Caco-2 (cell line): ENCODE measurements at regions of chr5 and their contacts with region 1.

Region 1: GRCh38 chr5:137891849-137892248 is 2.6 kb downstream of the PKD2L2 start:
- DNase-seq: peak in 1 of 2 experiments; percentile 20
- H3K4me3 ChIP-seq: no peak overlapping the region
- H3K4me3 Mint-ChIP-seq: no peak overlapping the region
- H3K27ac Mint-ChIP-seq: no peak overlapping the region
- H3K4me1 ChIP-seq: peaks cover 15% of the 10 kb centered on the region
- H3K4me1 Mint-ChIP-seq: peaks cover 13% of the 10 kb centered on the region
- H3K27me3 ChIP-seq: no peaks in the 10 kb centered on the region
- H3K27me3 Mint-ChIP-seq: no peaks in the 10 kb centered on the region
- CTCF ChIP-seq: peak in 1 of 2 experiments; percentile 36

Region 2: DNA sequence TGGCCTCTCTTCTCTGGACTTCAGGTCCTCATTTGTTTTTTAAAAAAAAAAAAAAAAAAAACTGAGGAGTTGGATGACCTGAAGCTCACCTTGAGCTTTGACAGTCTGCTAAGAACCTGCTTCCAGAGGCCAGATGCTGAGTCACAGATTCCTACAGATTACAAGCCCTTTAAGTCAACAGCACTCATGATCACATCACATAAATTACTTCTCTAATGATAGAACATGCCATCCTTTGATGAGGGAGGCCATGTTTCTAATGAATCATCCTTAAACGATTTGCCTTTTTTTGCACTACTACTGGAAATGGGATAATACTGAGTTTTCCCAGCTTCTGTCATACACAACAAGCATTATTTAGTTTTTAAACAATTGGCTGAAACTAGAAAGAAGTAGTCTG is 58.4 kb before region 1 on chr5:
- CTCF ChIA-PET with region 1: no interaction called
- POLR2A ChIA-PET with region 1: no interaction called
- intact Hi-C with region 1: loop called (anchors 5 kb)
- DNase-seq: peak; percentile 78 to 88
- H3K4me3 ChIP-seq: no peak overlapping the region
- H3K4me3 Mint-ChIP-seq: no peak overlapping the region
- H3K27ac Mint-ChIP-seq: peak overlapping the region; percentile 42
- H3K4me1 ChIP-seq: peaks cover 30% of the 10 kb centered on the region
- H3K4me1 Mint-ChIP-seq: peaks cover 18% of the 10 kb centered on the region
- H3K27me3 ChIP-seq: no peaks in the 10 kb centered on the region
- H3K27me3 Mint-ChIP-seq: no peaks in the 10 kb centered on the region
- CTCF ChIP-seq: no peak

Region 3: GRCh38 chr5:138011991-138012390 is 120.1 kb after region 1 on chr5:
- CTCF ChIA-PET with region 1: no interaction called
- POLR2A ChIA-PET with region 1: no interaction called
- intact Hi-C with region 1: no loop called
- DNase-seq: no peak
- H3K4me3 ChIP-seq: no peak overlapping the region
- H3K4me3 Mint-ChIP-seq: no peak overlapping the region
- H3K27ac Mint-ChIP-seq: no peak overlapping the region
- H3K4me1 ChIP-seq: no peaks in the 10 kb centered on the region
- H3K4me1 Mint-ChIP-seq: no peaks in the 10 kb centered on the region
- H3K27me3 ChIP-seq: no peaks in the 10 kb centered on the region
- H3K27me3 Mint-ChIP-seq: no peaks in the 10 kb centered on the region
- CTCF ChIP-seq: no peak